Lower leg skin (tissue), 4 donors: ENCODE measurements at regions of chr3 and their contacts with region 1.

Region 1: GRCh38 chr3:157274644-157275137 is 114.7 kb upstream of the CCNL1 start:
- DNase-seq: no peak
- H3K4me3 ChIP-seq: no peak overlapping the region
- CTCF ChIP-seq: no peak
- POLR2A ChIP-seq: no peak

Region 2: GRCh38 chr3:155753036-155753639 is 1521.6 kb before region 1 on chr3:
- intact Hi-C with region 1: no loop called
- DNase-seq: no peak
- H3K4me3 ChIP-seq: no peak overlapping the region
- CTCF ChIP-seq: no peak
- POLR2A ChIP-seq: no peak

Region 3: GRCh38 chr3:157436583-157437291 is 162.0 kb after region 1 on chr3 and contains the start of gene PTX3:
- intact Hi-C with region 1: no loop called
- DNase-seq: peak in 1 of 2 donors; percentile 34
- H3K4me3 ChIP-seq: peak within 1 kb of the TSS; percentile 33
- CTCF ChIP-seq: no peak
- POLR2A ChIP-seq: no peak
- total RNA-seq, gene PTX3: 1.5 to 16.1 (median 9.4) TPM

Region 4: GRCh38 chr3:157669416-157669815 is 394.7 kb after region 1 on chr3:
- intact Hi-C with region 1: loop called (anchors 5 kb)
- DNase-seq: no peak
- H3K4me3 ChIP-seq: no peak overlapping the region
- CTCF ChIP-seq: no peak
- POLR2A ChIP-seq: no peak